HCT116 (cell line): ENCODE measurements at regions of chr17 and their contacts with region 1.

Region 1: GRCh38 chr17:48457080-48457836 is 27.2 kb upstream of the SKAP1 start:
- DNase-seq: peak; percentile 54
- ATAC-seq: peak; percentile 91
- H3K4me3 ChIP-seq: peak overlapping the region; percentile 48 to 57
- H3K27ac ChIP-seq: no peak overlapping the region
- H3K4me1 ChIP-seq: peaks cover 10 to 20% of the 10 kb centered on the region in 2 experiments
- H3K27me3 ChIP-seq: no peaks in the 10 kb centered on the region
- CTCF ChIP-seq: peak; percentile 87 to 100 (median 100)
- POLR2A ChIP-seq: no peak
- RAD21 ChIP-seq: peak; percentile 69

Region 2: DNA sequence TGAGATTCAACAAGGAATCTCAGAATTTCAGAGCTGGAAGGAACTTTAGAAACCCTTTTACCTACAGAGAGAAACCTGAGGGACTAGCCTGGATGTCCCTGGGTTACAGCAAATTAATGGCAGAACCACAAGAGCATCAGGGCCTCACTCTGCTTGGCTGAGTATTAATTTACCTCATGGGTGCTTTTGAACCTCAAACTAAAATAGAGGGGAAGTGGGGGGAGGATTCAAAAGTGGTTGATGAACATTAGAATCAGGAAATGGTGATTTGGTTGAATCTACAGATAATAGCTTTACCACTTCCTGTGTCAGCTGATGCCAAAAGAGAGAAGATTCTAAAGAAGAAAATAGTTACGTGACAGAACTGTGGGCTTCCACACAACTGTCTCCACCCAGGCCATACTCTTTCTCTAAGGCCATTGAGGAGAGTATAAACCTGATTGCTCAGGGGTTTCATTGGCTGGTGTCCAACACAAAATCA is 16.0 kb before region 1 on chr17:
- CTCF ChIA-PET with region 1: interaction called, 13 read pairs
- POLR2A ChIA-PET with region 1: interaction called, 3 read pairs
- RAD21 ChIA-PET with region 1: no interaction called
- intact Hi-C with region 1: no loop called
- DNase-seq: no peak
- ATAC-seq: no peak
- H3K4me3 ChIP-seq: no peak overlapping the region
- H3K27ac ChIP-seq: no peak overlapping the region
- H3K4me1 ChIP-seq: peaks cover 0 to 4% of the 10 kb centered on the region in 2 experiments; a peak in 1 of 4 replicates
- H3K27me3 ChIP-seq: no peaks in the 10 kb centered on the region
- CTCF ChIP-seq: no peak
- POLR2A ChIP-seq: no peak
- RAD21 ChIP-seq: no peak

Region 3: GRCh38 chr17:48472411-48473281 is 15.4 kb after region 1 on chr17:
- CTCF ChIA-PET with region 1: interaction called, 10 read pairs
- POLR2A ChIA-PET with region 1: interaction called, 3 read pairs
- RAD21 ChIA-PET with region 1: no interaction called
- intact Hi-C with region 1: no loop called
- DNase-seq: peak; percentile 60
- ATAC-seq: peak; percentile 70
- H3K4me3 ChIP-seq: peak overlapping the region in 1 of 2 experiments; percentile 25; a peak in 3 of 4 replicates
- H3K27ac ChIP-seq: peak overlapping the region; percentile 74
- H3K4me1 ChIP-seq: peaks cover 24 to 37% of the 10 kb centered on the region in 2 experiments
- H3K27me3 ChIP-seq: no peaks in the 10 kb centered on the region
- CTCF ChIP-seq: no peak
- POLR2A ChIP-seq: no peak
- RAD21 ChIP-seq: no peak; the same call in 1 of the 2 replicates